Sciatic nerve (tissue), 2 donors: ENCODE measurements at regions of chr2 and their contacts with region 1.

Region 1: GRCh38 chr2:131557558-131558321 is 30.1 kb downstream of the CCDC74A start:
- DNase-seq: no peak
- ATAC-seq: no peak

Region 2: DNA sequence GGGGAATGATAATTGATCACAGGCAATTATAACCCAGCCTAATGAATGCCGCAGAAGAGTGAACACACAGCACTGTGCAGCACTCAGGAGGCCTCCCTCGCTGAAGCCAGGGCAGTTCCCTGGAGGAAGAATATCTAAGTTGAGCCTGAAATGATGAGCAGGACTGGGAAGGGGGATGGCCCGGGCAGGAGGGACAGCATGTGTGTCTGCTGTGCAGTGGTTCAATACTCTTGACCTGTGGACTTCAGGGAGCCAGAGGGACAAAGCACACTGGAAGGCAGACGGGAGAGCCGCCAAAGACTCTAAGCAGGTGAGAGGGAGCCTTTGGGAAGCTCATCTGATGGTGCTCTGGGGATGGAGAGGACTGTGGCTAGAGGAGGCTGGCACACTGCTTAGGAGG is 658.4 kb before region 1 on chr2:
- intact Hi-C with region 1: no loop called
- DNase-seq: no peak
- ATAC-seq: no peak

Region 3: GRCh38 chr2:131402320-131403039 is 155.3 kb before region 1 on chr2:
- intact Hi-C with region 1: no loop called
- DNase-seq: no peak
- ATAC-seq: no peak

Region 4: GRCh38 chr2:131577812-131578211 is 20.1 kb after region 1 on chr2:
- intact Hi-C with region 1: loop called (anchors 1 kb)
- DNase-seq: no peak
- ATAC-seq: no peak